Mammary epithelial cell (primary cell): ENCODE measurements at regions of chr9 and their contacts with region 1.

Region 1: DNA sequence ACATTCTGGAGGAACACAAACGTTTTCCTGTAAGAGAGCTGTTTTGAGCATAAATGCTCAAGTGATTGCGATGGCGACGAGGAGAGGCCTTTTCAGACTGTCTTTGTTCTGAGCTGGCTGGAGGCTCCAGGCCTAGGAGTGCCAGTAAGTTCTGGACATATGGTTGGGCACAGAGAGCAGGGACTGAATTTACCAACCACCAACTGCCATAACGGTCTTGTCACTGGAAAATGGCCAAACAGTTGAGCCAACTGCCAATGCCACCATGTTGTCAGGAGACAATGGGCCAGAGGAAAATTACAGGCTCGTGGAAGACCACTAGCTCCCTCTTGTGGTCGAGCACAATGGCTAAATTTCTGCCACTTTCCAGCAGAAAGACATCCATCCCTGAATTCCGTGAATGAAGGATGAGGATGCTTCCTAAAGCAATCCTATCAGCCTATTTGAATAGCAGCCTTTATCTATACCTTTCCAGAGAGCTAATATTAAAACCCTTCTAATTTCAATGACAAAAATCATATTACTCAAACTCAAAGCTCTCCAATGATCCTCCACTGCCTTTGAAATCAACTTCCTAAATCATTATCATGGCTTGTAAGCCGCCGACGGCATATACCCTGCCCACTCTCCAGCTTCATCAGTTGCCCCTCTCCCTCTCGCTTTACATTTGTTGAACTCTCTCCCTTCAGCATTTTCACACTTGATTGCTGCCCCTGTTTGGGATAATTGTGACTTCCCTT is 66.9 kb upstream of the GLIS3 start:
- DNase-seq: peak; percentile 39
- H3K4me3 ChIP-seq: no peak overlapping the region
- H3K27ac ChIP-seq: no peak overlapping the region
- H3K4me1 ChIP-seq: no peaks in the 10 kb centered on the region
- H3K27me3 ChIP-seq: no peaks in the 10 kb centered on the region
- CTCF ChIP-seq: peak; percentile 85 to 91

Region 2: GRCh38 chr9:3525836-3526164 is 841.0 kb before region 1 on chr9 and contains the start of gene RFX3:
- CTCF ChIA-PET with region 1: no interaction called
- dilution Hi-C with region 1: no loop called
- in situ Hi-C with region 1: no loop called
- intact Hi-C with region 1: loop called (anchors 10 kb)
- DNase-seq: peak; percentile 94
- H3K4me3 ChIP-seq: peak within 1 kb of the TSS; percentile 92 to 100 (median 98)
- H3K27ac ChIP-seq: peak within 1 kb of the TSS; percentile 99
- H3K4me1 ChIP-seq: peaks cover 8% of the 10 kb centered on the region
- H3K27me3 ChIP-seq: no peaks in the 10 kb centered on the region
- CTCF ChIP-seq: no peak
- total RNA-seq, gene RFX3: 2.3 to 7.9 TPM

Region 3: DNA sequence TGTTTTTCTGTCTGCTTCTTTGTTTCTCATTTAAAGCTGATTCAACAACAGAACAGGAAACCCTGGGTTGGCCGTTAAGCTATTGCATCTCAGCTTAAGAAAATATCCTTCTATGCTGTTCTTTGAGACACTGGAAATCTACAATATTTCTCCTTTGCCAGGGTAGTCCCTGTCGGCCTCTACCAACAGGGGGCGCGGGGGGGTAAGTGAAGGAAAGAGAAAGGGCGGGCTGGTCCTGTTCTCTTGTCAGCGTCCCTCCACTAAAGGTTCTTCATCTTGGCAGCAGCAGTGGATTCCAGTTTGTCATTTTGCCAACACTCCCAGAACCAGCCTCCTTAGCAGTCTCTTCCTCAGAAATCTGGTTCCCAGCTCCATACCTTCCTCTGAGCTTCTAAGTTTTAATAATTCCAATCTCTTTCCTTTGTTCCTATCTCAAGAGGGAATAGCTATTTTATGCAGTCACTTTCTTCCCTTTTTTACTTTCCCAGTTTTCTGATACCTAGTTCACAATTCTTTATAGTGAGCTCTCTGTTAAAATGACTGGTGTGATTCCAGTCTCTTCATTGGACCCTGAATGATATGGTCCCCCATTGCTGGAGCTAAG is 289.2 kb before region 1 on chr9:
- CTCF ChIA-PET with region 1: no interaction called
- dilution Hi-C with region 1: no loop called
- in situ Hi-C with region 1: no loop called
- intact Hi-C with region 1: loop called (anchors 2 kb)
- DNase-seq: peak; percentile 59
- H3K4me3 ChIP-seq: no peak overlapping the region
- H3K27ac ChIP-seq: no peak overlapping the region
- H3K4me1 ChIP-seq: no peaks in the 10 kb centered on the region
- H3K27me3 ChIP-seq: no peaks in the 10 kb centered on the region
- CTCF ChIP-seq: peak; percentile 92 to 93

Region 4: GRCh38 chr9:4297151-4297785 is 69.5 kb before region 1 on chr9:
- CTCF ChIA-PET with region 1: no interaction called
- dilution Hi-C with region 1: no loop called
- in situ Hi-C with region 1: no loop called
- intact Hi-C with region 1: loop called (anchors 1 kb)
- DNase-seq: peak; percentile 84
- H3K4me3 ChIP-seq: peak overlapping the region; percentile 43 to 62 (median 57)
- H3K27ac ChIP-seq: peak overlapping the region; percentile 64
- H3K4me1 ChIP-seq: peaks cover 64% of the 10 kb centered on the region
- H3K27me3 ChIP-seq: no peaks in the 10 kb centered on the region
- CTCF ChIP-seq: peak in 1 of 2 donors; percentile 58

Region 5: DNA sequence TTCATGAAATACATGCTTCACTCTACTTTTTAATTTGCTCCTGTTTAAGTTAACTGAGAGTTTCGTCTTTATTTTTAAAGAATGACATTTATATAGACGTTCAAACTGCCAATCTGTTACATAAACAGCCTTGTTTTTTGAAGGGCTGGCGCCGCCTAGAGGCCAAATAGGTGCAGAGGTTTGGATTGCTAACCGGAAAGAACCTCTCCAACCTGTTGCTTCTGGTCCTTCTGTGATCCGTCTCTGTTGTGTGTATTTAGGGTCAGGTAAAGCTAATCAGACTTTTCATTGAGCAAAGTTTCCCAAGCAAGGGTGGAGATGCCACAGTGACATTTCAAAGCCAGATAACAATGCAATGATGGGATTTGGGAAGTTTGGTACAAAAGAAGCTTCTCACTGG is 27.4 kb before region 1 on chr9:
- CTCF ChIA-PET with region 1: interaction called, 4 read pairs
- dilution Hi-C with region 1: no loop called
- in situ Hi-C with region 1: no loop called
- intact Hi-C with region 1: loop called (anchors 2 kb)
- DNase-seq: peak; percentile 80
- H3K4me3 ChIP-seq: no peak overlapping the region
- H3K27ac ChIP-seq: no peak overlapping the region
- H3K4me1 ChIP-seq: peaks cover 7% of the 10 kb centered on the region
- H3K27me3 ChIP-seq: no peaks in the 10 kb centered on the region
- CTCF ChIP-seq: peak; percentile 96 to 99